ENCODE measurements at regions of chr1 and their contacts with region 1.

Region 1: DNA sequence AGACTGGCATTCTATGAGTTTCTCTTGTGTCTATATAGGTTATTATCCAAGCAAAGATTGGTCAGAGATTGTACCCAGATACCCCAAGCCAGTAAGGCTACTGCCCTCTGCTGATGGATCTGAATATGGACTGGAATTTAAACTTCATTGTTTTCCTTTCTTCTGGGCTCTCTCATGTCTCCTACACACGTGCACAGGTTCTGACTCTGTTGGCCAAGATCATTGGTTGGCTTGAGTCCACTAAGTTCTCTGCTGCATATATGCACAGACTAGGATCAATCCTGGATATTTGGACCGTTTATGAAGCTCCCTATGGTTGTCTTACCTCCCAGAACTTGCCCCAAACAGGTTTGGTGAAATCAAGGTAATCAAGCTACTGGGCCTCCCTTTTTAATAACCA is 69.7 kb downstream of the CC2D1B start:
- DNase-seq: no peak
- H3K4me3 ChIP-seq: no peak overlapping the region
- H3K27ac ChIP-seq: no peak overlapping the region
- H3K4me1 ChIP-seq: no peaks in the 10 kb centered on the region
- H3K27me3 ChIP-seq: no peaks in the 10 kb centered on the region
- CTCF ChIP-seq: peak; percentile 57 to 66 (median 63)

Region 2: DNA sequence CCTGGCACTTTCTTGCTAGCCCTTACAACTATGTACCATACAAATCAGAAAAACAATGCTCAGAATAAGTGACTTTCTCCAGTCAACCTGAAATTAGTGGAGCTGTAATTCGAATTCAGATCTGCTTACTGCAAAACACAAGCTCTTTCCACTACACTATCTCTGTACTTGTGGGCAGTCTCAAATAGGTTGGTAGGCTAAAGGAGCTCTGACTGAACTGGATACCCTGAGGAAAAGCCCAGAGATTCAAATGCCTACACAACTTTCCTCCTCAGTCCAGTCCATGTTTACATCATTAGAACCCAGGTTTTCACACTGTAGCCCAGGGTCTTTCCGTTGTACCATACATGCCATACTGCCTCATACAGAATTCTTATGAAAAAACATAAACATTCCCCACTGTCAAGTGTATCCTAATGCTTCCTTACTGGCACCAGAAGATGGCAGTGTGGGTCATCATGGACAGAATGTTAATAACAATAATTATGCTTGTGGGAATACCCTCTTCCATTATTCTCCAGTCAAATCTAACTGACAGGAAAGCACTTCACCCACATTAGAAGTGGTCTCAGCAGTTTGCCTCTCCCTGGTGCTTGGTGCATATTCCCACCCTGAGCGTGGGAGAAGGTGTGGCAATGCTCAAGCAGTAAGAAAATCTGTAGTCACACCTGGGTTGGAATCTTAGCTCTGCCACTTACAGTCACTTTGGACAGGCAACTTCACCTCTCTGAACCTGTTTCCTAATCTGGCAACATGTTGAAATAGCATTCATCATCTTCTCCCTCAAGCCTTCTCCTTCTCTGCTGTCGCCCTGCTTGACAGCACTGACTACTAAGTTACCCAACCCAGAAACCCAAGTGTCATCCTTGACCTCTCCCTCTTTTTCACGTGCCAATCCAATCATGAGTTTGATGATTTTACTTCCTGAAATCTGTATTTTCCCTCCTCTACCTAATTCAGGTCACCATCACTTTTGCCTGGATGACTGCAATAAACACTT is 168.9 kb before region 1 on chr1:
- intact Hi-C with region 1: loop called (anchors 1 kb)
- DNase-seq: no peak
- H3K4me3 ChIP-seq: no peak overlapping the region
- H3K27ac ChIP-seq: no peak overlapping the region
- H3K4me1 ChIP-seq: no peaks in the 10 kb centered on the region
- H3K27me3 ChIP-seq: no peaks in the 10 kb centered on the region
- CTCF ChIP-seq: peak; percentile 50 to 83 (median 51)

Measured in ascending aorta (tissue), 2 donors.